IMR-90 (cell line): ENCODE measurements at regions of chr16 and their contacts with region 1.

Region 1: DNA sequence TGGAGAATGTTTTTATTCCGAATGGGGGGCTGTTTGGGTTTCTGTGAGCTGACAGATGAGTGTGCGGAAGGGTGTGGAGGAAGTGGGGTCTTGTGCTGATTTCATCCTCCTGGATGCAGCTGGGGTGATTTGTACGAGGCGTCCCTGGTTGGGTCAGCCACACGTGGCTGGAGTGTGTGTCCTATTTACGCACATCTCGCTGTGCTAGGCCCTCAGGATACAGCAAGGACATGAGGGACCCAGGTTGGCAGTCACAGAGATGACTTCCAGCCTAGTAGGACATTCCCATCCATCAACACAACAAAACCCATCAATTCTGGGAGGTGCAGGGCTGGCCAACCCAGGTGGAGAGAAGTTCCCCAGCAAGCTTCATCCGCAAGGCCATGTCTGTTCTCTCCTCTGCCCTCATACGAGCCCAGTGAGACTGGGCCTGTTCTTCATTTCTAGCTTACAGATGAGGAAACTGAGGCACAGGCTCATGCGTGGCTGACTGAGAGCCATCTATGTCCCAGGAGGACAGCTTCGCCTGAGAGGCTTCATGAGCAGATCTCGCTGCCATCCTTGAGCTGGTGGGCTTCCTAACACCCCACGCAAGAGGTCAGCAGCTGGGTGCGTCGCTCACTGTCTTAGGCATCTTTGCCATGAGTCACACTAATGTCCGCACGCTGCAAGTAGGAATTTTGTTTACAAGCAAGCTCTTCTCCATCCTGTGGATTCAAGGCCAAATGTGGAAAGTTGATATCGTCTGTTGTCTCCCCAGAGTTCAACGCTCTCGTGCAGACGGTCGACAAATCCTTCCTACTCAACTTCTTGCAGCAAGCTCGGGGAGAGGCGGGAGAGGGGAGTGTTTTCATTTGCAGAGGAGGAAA is 24.4 kb downstream of the IRF8 start:
- DNase-seq: peak; percentile 59
- ATAC-seq: peak; percentile 81
- H3K4me3 ChIP-seq: no peak overlapping the region
- H3K27ac ChIP-seq: peak overlapping the region; percentile 26; the same call in 1 of the 2 replicates
- H3K4me1 ChIP-seq: peaks cover 7% of the 10 kb centered on the region; the same call in 1 of the 2 replicates
- H3K27me3 ChIP-seq: peaks cover 44% of the 10 kb centered on the region
- CTCF ChIP-seq: no peak
- POLR2A ChIP-seq: no peak
- RAD21 ChIP-seq: no peak

Region 2: DNA sequence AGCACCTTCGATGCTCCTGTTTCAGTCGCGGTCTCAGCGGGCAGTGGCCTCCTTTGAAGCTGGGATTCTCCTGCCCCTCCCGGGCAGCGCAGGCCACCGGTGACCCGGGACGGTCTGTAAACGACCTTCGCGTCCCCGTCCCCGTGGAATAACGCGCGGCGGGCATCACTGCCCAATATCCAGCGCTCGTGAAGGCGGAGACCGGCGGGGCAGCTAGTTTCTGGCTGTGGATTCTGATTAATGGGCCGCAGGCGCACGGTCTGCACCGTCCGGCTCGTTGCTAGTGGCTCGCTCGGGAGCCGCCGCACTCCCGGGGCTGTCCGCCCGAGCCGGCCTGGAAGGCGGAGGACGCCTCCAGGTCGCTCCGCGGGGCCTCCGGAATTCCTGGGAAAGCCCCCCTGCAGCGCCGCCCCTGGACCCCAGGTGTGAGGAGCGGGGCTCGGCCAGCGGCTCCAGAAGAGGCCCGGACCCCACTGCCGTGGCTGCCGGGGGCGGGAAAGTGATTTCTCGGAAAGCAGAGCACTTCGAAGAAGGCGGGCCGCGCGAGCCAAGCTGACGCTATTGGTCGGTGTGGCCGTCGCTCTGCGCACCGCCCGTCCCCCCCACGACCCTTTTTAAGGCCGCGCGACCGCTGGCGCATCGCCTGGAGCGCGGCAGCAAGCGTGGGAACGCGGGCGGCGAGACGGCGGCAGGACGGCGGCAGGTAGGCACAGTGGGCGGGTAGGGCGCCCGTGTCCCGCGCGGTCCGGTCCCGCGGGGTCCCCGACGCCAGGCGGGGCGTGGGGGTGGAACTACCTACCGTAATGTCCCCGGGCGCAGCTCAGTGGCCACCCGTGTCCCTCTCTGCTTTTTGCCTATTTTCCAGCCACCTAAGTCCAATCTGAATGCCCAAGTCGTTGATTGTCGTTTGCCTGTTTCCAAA is 24.6 kb before region 1 on chr16 and contains the start of gene IRF8:
- CTCF ChIA-PET with region 1: no interaction called
- POLR2A ChIA-PET with region 1: interaction called, 11 read pairs
- dilution Hi-C with region 1: no loop called
- in situ Hi-C with region 1: no loop called
- intact Hi-C with region 1: no loop called
- DNase-seq: no peak
- ATAC-seq: peak; percentile 78
- H3K4me3 ChIP-seq: peak within 1 kb of the TSS; percentile 5; the same call in 1 of the 2 replicates
- H3K27ac ChIP-seq: no peak within 1 kb of the TSS
- H3K4me1 ChIP-seq: no peaks in the 10 kb centered on the region; the same call in 1 of the 2 replicates
- H3K27me3 ChIP-seq: peaks cover 88% of the 10 kb centered on the region
- CTCF ChIP-seq: no peak
- POLR2A ChIP-seq: no peak
- RAD21 ChIP-seq: no peak
- total RNA-seq, gene IRF8: not detected in 2 replicates

Region 3: DNA sequence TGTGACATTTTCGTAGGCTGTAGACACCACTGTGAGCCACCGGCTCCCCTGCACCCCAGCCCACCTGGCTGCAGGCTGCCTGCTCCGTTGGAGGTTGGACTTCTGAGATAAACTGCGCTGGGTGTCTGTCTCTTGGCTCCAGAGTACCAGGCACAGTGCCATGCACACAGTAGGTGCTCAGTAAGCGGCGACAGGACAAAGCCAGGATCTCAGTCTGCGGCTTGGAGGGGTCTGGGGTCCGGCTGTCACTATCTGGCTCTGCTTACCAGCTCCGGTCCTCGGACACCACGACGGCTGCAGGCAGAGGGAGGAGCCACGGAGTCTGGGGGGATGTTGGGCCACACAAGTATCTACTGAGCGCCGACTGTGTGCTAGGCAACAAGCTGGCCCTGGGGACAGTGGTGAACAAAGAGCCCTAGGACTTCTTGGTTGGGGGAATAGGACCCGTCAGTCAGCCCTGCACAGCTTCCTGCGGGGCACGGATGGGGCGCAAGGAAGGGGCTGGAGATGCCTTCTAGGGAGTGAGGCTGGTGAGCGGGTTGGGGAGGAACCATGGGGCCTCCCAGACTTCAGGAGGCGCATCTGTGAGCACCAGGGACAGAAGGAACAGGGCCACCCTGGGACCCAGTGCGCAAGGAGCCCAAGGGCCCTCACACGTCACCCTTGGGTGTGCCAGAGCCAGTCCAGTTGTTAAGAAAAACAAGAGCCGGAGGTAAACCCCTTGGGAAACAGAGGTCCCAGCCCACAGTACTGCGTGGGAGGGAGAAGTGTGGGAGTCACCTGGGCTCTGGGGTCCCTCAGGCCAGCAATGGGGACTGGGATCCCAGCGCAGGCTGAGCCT is 1696.2 kb after region 1 on chr16:
- CTCF ChIA-PET with region 1: no interaction called
- POLR2A ChIA-PET with region 1: interaction called, 13 read pairs
- dilution Hi-C with region 1: no loop called
- in situ Hi-C with region 1: no loop called
- intact Hi-C with region 1: no loop called
- DNase-seq: no peak
- ATAC-seq: no peak
- H3K4me3 ChIP-seq: no peak overlapping the region
- H3K27ac ChIP-seq: no peak overlapping the region
- H3K4me1 ChIP-seq: no peaks in the 10 kb centered on the region
- H3K27me3 ChIP-seq: peaks cover 63% of the 10 kb centered on the region
- CTCF ChIP-seq: no peak
- POLR2A ChIP-seq: no peak
- RAD21 ChIP-seq: no peak